CD4-positive, alpha-beta memory T cell (primary cell): ENCODE measurements at regions of chr11 and their contacts with region 1.

Region 1: GRCh38 chr11:75428281-75428724 is 4.7 kb downstream of the KLHL35 start:
- DNase-seq: peak; percentile 46 to 82 (median 55)
- H3K4me3 ChIP-seq: peak overlapping the region in 1 of 2 donors; percentile 16
- H3K4me3 Mint-ChIP-seq: peak overlapping the region in 7 of 8 donors; percentile 10 to 82 (median 65)
- H3K27ac ChIP-seq: no peak overlapping the region
- H3K27ac Mint-ChIP-seq: peak overlapping the region; percentile 57 to 90 (median 68)
- H3K4me1 ChIP-seq: peaks cover 25% of the 10 kb centered on the region
- H3K4me1 Mint-ChIP-seq: peaks cover 14 to 42% (median 22%) of the 10 kb centered on the region in 4 donors
- H3K27me3 ChIP-seq: peaks cover 6% of the 10 kb centered on the region
- H3K27me3 Mint-ChIP-seq: peaks cover 7 to 24% of the 10 kb centered on the region in 2 donors

Region 2: DNA sequence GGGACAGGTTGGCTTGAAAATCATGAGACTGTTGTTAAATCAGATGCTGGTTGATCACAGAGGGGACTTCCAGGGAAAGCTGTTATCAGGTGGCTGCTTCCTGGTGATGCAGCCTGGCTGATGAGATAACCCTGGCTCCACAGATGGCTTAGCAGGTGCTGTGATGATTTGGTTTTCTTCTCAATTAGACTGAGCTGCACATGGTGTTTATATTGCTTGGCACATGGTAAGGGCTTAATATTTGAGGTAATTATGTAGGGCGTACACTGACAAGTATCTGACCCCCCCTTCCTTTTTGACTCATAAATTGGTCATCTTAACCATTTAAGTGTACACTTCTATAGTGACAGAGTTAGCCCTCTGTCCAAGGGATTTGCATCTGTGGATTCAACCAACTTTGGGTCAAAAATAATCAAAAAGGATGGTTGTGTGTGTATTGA is 21.9 kb before region 1 on chr11:
- CTCF ChIA-PET with region 1: interaction called, 29 read pairs
- POLR2A ChIA-PET with region 1: interaction called, 39 read pairs
- intact Hi-C with region 1: no loop called
- DNase-seq: no peak
- H3K4me3 ChIP-seq: no peak overlapping the region
- H3K4me3 Mint-ChIP-seq: no peak overlapping the region
- H3K27ac ChIP-seq: no peak overlapping the region
- H3K27ac Mint-ChIP-seq: peak overlapping the region in 2 of 7 donors; percentile 42 to 68
- H3K4me1 ChIP-seq: peaks cover 36% of the 10 kb centered on the region
- H3K4me1 Mint-ChIP-seq: peaks cover 30 to 53% (median 36%) of the 10 kb centered on the region in 4 donors
- H3K27me3 ChIP-seq: no peaks in the 10 kb centered on the region
- H3K27me3 Mint-ChIP-seq: no peaks in the 10 kb centered on the region

Region 3: DNA sequence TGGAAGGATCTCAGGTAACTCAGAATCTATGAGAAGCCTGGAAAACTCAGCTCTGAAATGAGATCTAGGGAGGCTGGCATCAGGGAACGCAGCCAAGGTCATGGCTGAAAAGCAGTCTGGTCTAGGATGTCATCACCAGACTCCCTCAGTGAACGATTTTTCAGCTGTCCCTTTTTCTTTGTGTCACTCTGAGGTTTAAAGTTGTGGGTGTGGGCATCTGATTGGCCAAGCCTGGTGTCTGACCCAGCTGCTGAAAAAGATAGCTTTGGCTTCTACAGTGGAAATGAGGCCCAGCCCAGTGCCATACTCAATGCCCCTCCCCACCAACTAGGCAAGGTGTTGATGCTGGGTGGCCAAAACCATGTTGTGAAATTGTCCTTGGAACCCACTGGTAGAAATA is 14.4 kb before region 1 on chr11:
- CTCF ChIA-PET with region 1: interaction called, 29 read pairs
- POLR2A ChIA-PET with region 1: interaction called, 3 read pairs
- intact Hi-C with region 1: no loop called
- DNase-seq: no peak
- H3K4me3 ChIP-seq: no peak overlapping the region
- H3K4me3 Mint-ChIP-seq: no peak overlapping the region
- H3K27ac ChIP-seq: no peak overlapping the region
- H3K27ac Mint-ChIP-seq: no peak overlapping the region
- H3K4me1 ChIP-seq: no peaks in the 10 kb centered on the region
- H3K4me1 Mint-ChIP-seq: peaks cover 0 to 4% (median 2%) of the 10 kb centered on the region in 4 donors
- H3K27me3 ChIP-seq: no peaks in the 10 kb centered on the region
- H3K27me3 Mint-ChIP-seq: no peaks in the 10 kb centered on the region